Natural killer cell (primary cell): ENCODE measurements at regions of chr5 and their contacts with region 1.

Region 1: DNA sequence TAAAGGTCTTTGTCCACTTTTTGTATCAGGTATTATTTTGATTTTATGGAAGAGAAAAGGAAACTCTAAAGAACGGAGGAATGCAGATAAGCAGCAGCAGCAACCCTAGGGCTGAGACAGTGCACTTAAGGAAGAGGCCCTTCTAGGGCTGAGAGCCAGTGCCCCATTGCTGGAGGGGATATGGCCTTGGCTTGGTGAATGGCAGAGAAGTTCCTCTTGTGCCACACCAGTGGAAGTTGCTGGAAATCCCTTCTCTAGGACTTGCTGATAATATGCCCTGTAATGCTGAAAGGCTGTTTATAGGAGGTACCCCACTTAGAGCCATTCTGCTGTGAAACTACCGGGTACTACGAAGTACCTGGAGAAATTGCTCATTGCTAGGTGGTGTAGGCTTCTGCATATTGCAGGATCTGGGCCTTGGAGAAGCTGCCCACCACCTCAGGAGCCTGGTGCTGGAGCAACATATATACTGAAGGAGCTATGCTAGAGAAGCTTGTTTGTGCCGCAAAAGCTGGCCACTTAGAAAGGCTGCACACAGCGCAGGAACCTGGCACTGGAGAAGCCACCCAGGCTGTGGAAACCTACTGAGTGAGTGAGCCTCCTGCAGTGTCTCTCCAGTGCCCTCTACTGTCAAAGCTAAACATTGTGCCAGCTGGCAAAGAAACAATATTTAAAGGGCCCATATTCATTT is 9.6 kb upstream of the UBTD2 start:
- DNase-seq: peak; percentile 22 to 82
- ATAC-seq: peak; percentile 95 to 100 (median 99)
- H3K4me3 ChIP-seq: no peak overlapping the region
- H3K4me3 Mint-ChIP-seq: no peak overlapping the region
- H3K27ac ChIP-seq: no peak overlapping the region
- H3K27ac Mint-ChIP-seq: no peak overlapping the region
- H3K4me1 ChIP-seq: peaks cover 3% of the 10 kb centered on the region
- H3K4me1 Mint-ChIP-seq: peaks cover 0 to 5% of the 10 kb centered on the region in 2 donors
- H3K27me3 ChIP-seq: no peaks in the 10 kb centered on the region
- H3K27me3 Mint-ChIP-seq: no peaks in the 10 kb centered on the region
- CTCF ChIP-seq: peak; percentile 77

Region 2: DNA sequence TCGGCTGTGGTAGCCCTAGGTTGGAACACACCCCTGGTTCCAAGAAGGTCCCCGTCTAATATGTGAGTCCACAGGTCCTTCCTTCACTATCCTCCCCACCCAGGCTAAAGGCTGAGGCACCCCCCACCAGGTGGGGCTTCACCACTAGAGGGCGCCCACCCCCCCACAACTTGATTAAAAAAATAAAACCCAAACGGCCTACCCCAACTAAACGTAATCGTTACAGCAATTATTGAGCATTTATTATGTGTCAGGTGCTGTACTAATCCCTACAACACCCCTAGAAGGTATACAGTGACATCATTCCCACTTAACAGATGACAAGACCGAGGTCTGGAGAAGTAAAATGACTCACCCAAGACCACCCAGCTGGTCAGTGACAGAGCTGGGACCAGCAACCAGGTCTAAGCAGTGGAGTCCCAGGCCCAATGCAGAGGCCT is 808.7 kb before region 1 on chr5:
- intact Hi-C with region 1: loop called (anchors 10 kb)
- DNase-seq: peak; percentile 37 to 62
- ATAC-seq: peak in 2 of 3 donors; percentile 47 to 69
- H3K4me3 ChIP-seq: no peak overlapping the region
- H3K4me3 Mint-ChIP-seq: no peak overlapping the region
- H3K27ac ChIP-seq: no peak overlapping the region
- H3K27ac Mint-ChIP-seq: no peak overlapping the region
- H3K4me1 ChIP-seq: peaks cover 4% of the 10 kb centered on the region
- H3K4me1 Mint-ChIP-seq: peaks cover 0 to 13% of the 10 kb centered on the region in 2 donors
- H3K27me3 ChIP-seq: no peaks in the 10 kb centered on the region
- H3K27me3 Mint-ChIP-seq: peaks cover 8 to 10% of the 10 kb centered on the region in 2 donors
- CTCF ChIP-seq: peak; percentile 76

Region 3: GRCh38 chr5:171913987-171914273 is 379.3 kb before region 1 on chr5:
- intact Hi-C with region 1: loop called (anchors 5 kb)
- DNase-seq: no peak
- ATAC-seq: no peak
- H3K4me3 ChIP-seq: no peak overlapping the region
- H3K4me3 Mint-ChIP-seq: no peak overlapping the region
- H3K27ac ChIP-seq: no peak overlapping the region
- H3K27ac Mint-ChIP-seq: peak overlapping the region in 1 of 2 donors; percentile 75
- H3K4me1 ChIP-seq: peaks cover 10% of the 10 kb centered on the region
- H3K4me1 Mint-ChIP-seq: peaks cover 55 to 56% of the 10 kb centered on the region in 2 donors
- H3K27me3 ChIP-seq: no peaks in the 10 kb centered on the region
- H3K27me3 Mint-ChIP-seq: no peaks in the 10 kb centered on the region
- CTCF ChIP-seq: no peak

Region 4: DNA sequence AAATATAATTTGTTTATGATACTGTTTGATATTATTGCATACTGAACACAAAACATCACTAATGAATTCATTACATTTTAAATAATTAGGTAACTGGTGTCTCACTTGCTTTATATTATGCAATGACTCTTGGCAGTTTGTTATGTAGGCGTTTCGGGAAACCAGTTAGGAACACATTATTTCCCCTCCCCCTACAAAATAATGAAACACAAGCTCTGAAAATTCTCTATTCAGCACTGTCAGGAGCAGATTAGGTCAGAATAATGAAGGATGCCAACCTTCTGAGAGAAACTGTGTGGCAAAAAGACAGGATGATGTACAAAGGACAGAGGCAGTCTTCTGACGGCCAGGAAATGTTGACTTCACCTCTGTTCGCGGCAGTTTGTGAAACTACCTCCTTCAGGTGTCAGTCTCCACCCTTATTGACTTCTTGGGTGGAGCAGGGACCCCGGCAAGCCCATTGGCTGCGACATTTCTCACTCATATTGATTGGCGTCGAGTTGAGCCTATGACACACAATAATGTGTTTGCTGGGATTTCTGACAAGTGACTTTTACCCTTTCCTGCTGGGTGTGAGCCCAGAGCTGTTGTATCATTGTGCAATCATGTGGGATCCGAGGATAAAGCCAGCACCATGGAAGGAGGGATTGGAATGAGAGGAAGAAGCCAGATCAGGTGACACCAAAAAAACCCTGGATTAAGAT is 127.2 kb after region 1 on chr5:
- intact Hi-C with region 1: no loop called
- DNase-seq: no peak
- ATAC-seq: peak in 1 of 3 donors; percentile 28
- H3K4me3 ChIP-seq: no peak overlapping the region
- H3K4me3 Mint-ChIP-seq: no peak overlapping the region
- H3K27ac ChIP-seq: no peak overlapping the region
- H3K27ac Mint-ChIP-seq: no peak overlapping the region
- H3K4me1 ChIP-seq: no peaks in the 10 kb centered on the region
- H3K4me1 Mint-ChIP-seq: no peaks in the 10 kb centered on the region
- H3K27me3 ChIP-seq: no peaks in the 10 kb centered on the region
- H3K27me3 Mint-ChIP-seq: peaks cover 6 to 7% of the 10 kb centered on the region in 2 donors
- CTCF ChIP-seq: no peak

Region 5: DNA sequence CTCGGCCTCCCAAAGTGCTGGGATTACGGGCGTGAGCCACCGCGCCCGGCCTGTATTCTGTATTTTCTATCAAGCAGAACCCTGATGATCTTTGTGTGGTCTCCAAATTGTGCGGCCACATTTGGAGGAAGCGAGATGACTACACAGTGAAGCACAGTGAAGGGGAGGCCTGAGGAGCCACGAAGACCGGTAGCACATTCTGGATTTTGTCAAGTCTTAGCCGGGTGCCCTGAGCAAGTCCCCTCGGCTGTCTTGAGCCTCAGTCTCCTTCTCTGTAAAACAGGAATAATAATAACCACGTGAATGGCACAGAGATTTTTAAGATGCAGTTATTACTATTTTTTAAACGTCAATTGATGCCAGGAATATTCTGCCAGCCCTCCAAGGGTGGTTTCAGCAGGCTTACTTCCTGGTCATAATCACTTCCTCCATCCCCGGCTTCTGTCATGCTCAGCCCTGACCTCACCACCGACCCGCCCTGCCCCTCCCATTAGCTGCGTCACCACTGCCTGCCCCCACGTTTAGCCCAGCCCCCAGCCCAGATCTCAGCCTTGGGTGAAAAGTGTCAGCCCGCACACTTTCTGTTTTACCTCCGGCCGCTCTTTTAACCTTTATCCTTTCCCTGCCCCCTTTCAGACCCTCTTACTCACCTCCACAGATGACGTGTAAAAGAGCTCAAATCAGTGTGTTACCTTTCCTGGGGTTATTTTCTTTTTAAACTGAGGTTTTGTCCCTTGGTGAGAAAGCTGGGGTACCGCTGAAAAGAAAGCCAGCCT is 513.9 kb after region 1 on chr5:
- intact Hi-C with region 1: no loop called
- DNase-seq: peak; percentile 77 to 90
- ATAC-seq: peak; percentile 97 to 99 (median 99)
- H3K4me3 ChIP-seq: peak overlapping the region; percentile 49
- H3K4me3 Mint-ChIP-seq: peak overlapping the region; percentile 80
- H3K27ac ChIP-seq: peak overlapping the region; percentile 91
- H3K27ac Mint-ChIP-seq: peak overlapping the region; percentile 81 to 93
- H3K4me1 ChIP-seq: peaks cover 21% of the 10 kb centered on the region
- H3K4me1 Mint-ChIP-seq: peaks cover 9 to 25% of the 10 kb centered on the region in 2 donors
- H3K27me3 ChIP-seq: no peaks in the 10 kb centered on the region
- H3K27me3 Mint-ChIP-seq: no peaks in the 10 kb centered on the region
- CTCF ChIP-seq: no peak